RWPE1 (cell line): ENCODE measurements at regions of chr10 and their contacts with region 1.

Region 1: DNA sequence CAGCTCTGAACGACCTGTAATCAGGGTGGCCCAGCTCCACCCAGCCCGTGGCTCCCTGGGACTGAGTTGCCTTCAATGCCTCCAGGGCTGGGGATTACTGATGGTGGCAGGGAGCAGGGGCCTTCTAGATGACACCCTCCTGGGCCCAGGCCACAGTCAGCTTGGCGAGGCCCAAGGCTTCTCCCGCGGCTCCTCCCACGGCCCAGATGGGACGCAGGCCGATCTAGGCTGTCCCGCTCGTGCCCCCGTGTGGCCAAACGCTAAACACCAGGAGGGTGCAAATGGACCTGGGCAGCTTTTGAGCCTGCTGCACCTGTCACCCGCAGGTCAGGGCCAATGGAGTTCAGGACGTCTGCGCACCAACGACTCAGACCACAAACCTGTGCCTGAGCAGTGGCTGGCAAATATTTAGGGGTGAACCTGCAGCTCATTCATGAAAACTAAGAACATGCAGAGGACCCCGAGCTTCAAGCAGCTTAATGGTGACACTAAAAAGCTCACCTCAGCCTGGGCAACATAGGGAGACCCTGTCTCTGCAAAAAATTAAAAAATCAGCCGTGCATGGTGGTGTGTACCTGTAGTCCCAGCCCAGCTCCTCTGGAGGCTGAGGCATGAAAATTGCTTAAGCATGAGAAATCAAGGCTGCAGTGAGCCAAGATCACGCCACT is 43.2 kb downstream of the ASB13 start:
- DNase-seq: peak; percentile 80
- H3K27ac ChIP-seq: peak overlapping the region; percentile 68
- CTCF ChIP-seq: peak; percentile 91

Region 2: DNA sequence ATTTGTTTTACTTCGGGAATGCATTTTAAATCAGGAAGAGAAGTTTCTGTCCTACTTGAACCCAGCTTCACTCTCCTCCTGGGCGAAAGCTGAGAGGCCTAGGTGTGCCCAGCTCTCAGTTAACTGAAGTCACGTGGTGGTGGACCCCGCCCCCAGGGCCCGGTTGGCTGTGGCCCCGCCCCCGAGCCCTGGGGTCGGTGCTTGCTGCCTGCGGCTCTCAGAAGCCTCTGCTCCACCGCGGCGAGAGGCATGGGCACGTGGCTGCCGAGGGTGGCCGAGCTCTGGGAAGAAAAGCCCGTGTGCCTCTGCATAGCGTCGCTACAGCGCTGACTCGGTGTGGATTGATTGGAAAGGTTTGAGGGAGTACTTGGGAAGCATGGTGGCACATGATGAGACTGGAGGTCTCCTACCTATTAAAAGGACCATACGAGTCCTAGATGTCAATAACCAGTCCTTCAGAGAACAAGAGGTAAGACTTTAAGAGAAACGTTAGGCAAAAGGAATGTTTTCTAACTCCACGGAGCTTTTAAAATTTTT is 176.8 kb before region 1 on chr10:
- CTCF ChIA-PET with region 1: interaction called, 18 read pairs
- POLR2A ChIA-PET with region 1: interaction called, 8 read pairs
- DNase-seq: peak; percentile 95
- H3K27ac ChIP-seq: peak overlapping the region; percentile 76
- CTCF ChIP-seq: no peak

Region 3: GRCh38 chr10:5461914-5462840 is 161.0 kb before region 1 on chr10:
- CTCF ChIA-PET with region 1: interaction called, 14 read pairs
- POLR2A ChIA-PET with region 1: no interaction called
- DNase-seq: no peak
- H3K27ac ChIP-seq: peak overlapping the region; percentile 63
- CTCF ChIP-seq: no peak

Region 4: DNA sequence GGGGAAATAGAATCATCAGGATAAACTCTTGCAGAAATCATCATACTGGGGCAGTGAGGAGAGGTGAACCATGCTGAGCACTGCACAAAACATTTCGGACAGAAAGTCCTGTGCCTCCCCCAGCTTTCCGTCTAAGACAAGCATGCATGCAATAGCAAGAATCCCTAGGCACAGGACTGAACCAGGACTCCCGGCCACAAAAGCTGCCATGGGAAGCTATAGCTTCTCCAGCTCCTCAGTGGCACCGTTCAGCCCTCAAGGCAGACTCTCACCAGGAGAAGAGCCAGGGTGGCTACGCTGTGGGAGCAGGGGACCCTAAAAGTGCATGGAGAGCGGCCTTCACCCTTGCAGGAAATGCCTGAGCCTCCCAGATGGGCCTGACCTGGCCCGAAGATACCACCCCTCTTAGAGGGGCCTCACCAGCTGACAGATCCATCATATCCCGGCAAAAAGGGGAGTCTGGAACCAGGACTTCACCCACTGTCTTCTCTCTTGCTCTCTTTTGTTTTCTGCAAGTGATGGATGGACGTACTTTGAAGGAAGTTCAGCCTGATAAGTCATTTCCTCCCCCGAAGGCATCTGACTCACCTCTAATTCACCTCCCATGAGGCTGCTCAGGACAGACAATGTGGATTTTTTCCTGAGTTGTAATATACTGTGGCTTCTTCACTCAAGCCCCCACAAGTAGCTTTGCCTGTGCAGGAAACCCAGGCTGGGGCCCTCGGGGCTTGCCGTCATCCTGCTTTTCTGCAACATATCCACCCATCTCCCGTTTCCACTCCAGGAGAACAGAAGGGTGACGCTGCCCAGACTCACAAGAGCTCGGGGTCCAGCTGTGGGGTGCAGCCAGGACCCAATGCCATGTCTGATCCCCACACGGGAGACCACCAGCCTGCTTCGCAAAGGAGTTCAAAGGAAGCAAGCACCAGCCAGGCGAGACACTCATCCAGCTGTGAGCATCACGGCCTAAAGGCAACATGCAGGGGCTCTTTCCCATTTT is 27.3 kb before region 1 on chr10:
- CTCF ChIA-PET with region 1: interaction called, 16 read pairs
- POLR2A ChIA-PET with region 1: interaction called, 4 read pairs
- DNase-seq: peak; percentile 91
- H3K27ac ChIP-seq: peak overlapping the region; percentile 95
- CTCF ChIP-seq: no peak